Mammary epithelial cell (primary cell): ENCODE measurements at regions of chr15 and their contacts with region 1.

Region 1: GRCh38 chr15:84833447-84834228 is 16.5 kb downstream of the ALPK3 start:
- DNase-seq: peak; percentile 40
- H3K4me3 ChIP-seq: no peak overlapping the region
- H3K27ac ChIP-seq: no peak overlapping the region
- H3K4me1 ChIP-seq: no peaks in the 10 kb centered on the region
- H3K27me3 ChIP-seq: no peaks in the 10 kb centered on the region
- CTCF ChIP-seq: no peak

Region 2: GRCh38 chr15:84818261-84819131 is 15.1 kb before region 1 on chr15:
- CTCF ChIA-PET with region 1: no interaction called
- dilution Hi-C with region 1: no loop called
- in situ Hi-C with region 1: no loop called
- intact Hi-C with region 1: no loop called
- DNase-seq: no peak
- H3K4me3 ChIP-seq: no peak overlapping the region
- H3K27ac ChIP-seq: no peak overlapping the region
- H3K4me1 ChIP-seq: no peaks in the 10 kb centered on the region
- H3K27me3 ChIP-seq: no peaks in the 10 kb centered on the region
- CTCF ChIP-seq: no peak

Region 3: GRCh38 chr15:84844964-84845363 is 11.3 kb after region 1 on chr15:
- CTCF ChIA-PET with region 1: no interaction called
- dilution Hi-C with region 1: no loop called
- in situ Hi-C with region 1: no loop called
- intact Hi-C with region 1: no loop called
- DNase-seq: no peak
- H3K4me3 ChIP-seq: no peak overlapping the region
- H3K27ac ChIP-seq: no peak overlapping the region
- H3K4me1 ChIP-seq: no peaks in the 10 kb centered on the region
- H3K27me3 ChIP-seq: no peaks in the 10 kb centered on the region
- CTCF ChIP-seq: no peak

Region 4: DNA sequence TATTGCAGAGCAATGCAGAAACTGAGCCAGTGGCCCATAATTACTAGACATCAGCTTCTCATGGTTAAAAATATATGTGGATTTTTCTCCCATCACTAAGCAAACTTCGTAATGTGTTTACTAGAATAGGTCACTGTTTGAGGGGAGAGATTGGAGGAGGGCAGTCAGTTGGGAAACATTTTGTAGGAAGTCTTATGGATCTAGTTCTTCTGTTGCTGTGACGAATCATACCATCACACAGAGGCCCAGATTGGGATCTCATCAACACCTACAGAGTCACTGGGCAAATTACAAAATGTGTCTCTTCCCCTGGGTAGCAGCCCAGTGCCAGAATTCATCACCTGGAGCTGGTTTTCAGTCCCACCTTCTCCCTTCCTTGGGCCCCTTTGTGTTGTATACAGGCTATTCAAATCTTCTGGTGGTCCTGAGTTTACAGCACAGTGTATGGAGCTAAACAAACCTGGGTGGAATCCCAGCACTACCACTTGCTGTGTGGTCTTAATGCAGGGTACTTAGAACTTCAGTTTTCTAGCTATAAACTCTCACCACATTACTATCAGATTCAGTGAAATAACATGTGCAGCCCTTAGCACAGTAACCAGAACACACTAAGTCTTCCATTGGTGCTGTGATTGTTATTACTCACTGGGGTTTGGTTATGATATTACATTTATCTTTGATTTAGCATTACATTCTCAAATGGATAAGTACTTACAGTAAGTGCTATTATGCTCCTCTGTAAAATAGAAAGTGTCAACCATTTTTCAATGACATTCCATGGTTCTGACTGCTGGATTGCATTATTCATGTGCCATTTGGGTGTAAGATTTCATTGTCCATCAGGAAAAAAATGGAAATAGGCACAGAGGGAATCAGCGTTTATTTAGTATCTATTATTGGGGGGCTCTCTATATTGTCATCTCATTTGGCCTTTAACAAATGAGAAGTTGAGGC is 229.8 kb after region 1 on chr15:
- CTCF ChIA-PET with region 1: no interaction called
- dilution Hi-C with region 1: loop called (anchors 5 kb)
- in situ Hi-C with region 1: loop called in 1 of 2 experiments (anchors 25 kb)
- intact Hi-C with region 1: no loop called
- DNase-seq: no peak
- H3K4me3 ChIP-seq: no peak overlapping the region
- H3K27ac ChIP-seq: no peak overlapping the region
- H3K4me1 ChIP-seq: no peaks in the 10 kb centered on the region
- H3K27me3 ChIP-seq: no peaks in the 10 kb centered on the region
- CTCF ChIP-seq: no peak